GM18951 (cell line): ENCODE measurements at regions of chr5 and their contacts with region 1.

Region 1: DNA sequence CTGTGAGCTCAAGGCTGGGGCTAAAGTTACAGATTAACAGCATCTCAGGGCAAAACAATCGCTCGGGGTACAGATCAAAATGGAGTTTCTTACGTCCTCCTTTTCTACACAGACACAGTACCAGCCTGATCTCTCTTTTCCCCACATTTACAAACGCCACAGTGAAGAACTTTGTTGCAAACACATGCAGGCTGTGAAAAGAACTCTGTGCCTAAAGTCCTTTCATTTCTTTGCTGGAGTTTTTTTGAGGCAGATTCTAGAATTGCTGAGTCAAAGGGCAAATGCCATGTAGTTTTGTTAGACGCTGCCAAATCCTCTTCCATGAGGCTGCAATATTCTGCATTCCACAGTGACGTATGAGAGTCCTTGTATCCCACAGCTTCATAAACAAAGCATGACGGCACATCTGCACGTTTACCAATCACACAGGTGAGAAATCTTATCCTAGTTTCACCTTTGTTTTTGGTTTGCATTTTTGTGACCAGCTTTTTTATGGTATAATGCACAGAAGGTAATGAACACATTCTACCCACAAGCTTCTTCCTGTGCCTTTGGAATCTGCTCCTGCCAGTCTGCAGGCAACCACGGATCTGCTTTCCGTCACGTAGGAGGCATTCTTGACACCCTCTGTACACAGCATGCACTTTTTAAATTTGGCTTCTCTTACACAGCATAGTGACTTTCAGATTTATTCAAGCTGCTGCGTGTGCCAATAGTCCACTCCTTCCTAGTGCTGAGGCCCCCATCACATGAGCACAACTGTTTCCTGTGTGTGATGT is 44.6 kb upstream of the LPCAT1 start:
- POLR2A ChIP-seq: no peak

Region 2: DNA sequence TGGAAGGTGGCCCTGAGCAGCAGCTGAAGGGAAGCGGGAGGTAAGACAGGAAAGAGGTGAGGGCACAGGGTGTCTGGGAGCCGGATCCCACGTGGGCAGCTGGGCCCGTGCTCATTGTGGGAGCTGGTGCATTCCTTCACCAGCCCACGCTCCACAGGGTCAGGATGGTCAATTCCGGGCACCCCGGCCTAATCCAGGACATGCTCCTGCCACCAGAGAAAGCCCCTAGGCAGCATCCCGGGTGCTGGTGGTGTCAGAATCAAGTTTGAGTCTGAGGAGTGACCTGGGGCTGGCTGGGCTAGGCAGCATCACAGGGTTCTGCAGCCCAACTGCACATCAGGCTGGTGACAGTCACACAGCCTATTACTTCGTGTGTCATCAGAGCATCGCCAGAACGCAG is 1304.0 kb before region 1 on chr5:
- in situ Hi-C with region 1: loop called (anchors 5 kb)
- POLR2A ChIP-seq: no peak